OCI-LY7 (cell line): ENCODE measurements at regions of chr4 and their contacts with region 1.

Region 1: GRCh38 chr4:70839589-70840093 is at the start of gene GRSF1:
- DNase-seq: peak; percentile 97
- H3K4me3 ChIP-seq: peak within 1 kb of the TSS; percentile 73
- H3K27ac ChIP-seq: peak within 1 kb of the TSS; percentile 76
- H3K4me1 ChIP-seq: peaks cover 41% of the 10 kb centered on the region
- CTCF ChIP-seq: peak; percentile 21; the same call in 1 of the 2 replicates
- total RNA-seq, gene GRSF1: 32.8 and 36.7 TPM in 2 replicates

Region 2: GRCh38 chr4:70704331-70705145 is 135.1 kb before region 1 on chr4:
- CTCF ChIA-PET with region 1: no interaction called
- POLR2A ChIA-PET with region 1: interaction called, 5 read pairs
- intact Hi-C with region 1: loop called (anchors 2 kb)
- DNase-seq: peak; percentile 85
- H3K4me3 ChIP-seq: peak overlapping the region; percentile 90
- H3K27ac ChIP-seq: peak overlapping the region; percentile 77
- H3K4me1 ChIP-seq: peaks cover 32% of the 10 kb centered on the region
- CTCF ChIP-seq: peak; percentile 71

Region 3: DNA sequence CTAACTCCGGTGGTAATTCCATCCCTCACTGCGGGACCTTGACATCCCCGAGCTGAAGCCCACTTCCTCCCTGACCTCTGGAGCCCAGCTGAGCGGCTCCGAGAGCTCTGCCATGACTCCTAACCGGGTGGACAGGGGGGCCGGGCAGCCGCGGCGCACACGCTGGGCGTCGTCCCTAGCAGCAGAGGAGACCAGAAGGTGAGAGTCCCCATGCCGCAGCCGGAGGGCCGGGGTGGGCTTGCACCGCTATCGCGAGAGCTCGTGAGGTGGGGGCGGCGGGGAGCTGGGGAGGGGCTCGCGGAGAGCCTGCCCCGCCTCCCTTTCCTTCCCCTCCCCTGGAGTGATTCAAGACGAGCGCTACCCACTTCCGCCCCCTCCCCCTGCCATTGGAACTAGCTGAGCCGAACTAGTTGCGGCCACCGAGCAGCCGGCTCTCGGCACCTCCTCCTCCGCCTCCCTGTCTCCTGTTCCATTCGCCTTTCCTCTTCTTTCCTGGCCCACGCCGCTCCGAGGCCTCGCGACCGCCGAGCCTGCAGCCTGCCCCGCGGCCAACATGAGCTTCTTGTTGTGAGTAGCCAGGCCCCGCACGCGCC is 62.4 kb after region 1 on chr4 and contains the start of gene MOB1B:
- CTCF ChIA-PET with region 1: no interaction called
- POLR2A ChIA-PET with region 1: interaction called, 10 read pairs
- intact Hi-C with region 1: loop called (anchors 1 kb)
- DNase-seq: peak; percentile 91
- H3K4me3 ChIP-seq: peak within 1 kb of the TSS; percentile 95
- H3K27ac ChIP-seq: peak within 1 kb of the TSS; percentile 46
- H3K4me1 ChIP-seq: peaks cover 15% of the 10 kb centered on the region
- CTCF ChIP-seq: 0 out of 2 replicates have a peak, but pooled peaks have one; percentile 24
- total RNA-seq, gene MOB1B: 3.9 and 4.7 TPM in 2 replicates

Region 4: DNA sequence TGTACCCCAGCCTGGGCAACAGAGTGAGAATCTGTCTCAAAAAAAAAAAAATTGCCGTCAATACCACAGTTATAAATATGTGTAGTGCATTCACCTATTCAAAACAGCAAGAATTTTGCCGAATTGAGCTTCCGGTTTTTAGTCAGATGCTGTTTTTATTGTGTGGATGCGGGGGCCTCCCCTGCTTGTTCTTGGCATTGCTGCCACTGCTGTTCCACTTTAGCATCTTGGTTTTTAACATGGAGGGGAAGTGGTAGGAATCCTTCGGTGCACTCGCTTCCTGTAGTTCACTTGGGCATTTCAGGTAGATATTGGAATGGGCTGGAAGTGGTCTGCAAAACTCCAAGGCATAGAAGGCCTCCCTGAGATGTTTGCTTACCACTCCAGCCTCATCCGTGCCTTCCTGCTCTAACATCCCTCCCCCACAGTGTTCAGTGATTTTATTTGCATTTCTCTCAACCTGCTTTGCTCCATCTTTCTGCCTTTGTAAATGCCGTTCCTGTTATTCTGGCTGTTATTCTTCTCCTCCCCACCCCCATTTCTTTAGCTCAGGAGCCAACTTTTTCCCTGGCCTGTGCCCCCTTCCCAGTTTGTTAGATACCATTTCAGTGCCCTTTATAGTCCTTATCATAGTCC is 88.0 kb after region 1 on chr4:
- CTCF ChIA-PET with region 1: no interaction called
- POLR2A ChIA-PET with region 1: no interaction called
- intact Hi-C with region 1: loop called (anchors 1 kb)
- DNase-seq: peak; percentile 81
- H3K4me3 ChIP-seq: peak overlapping the region; percentile 63
- H3K27ac ChIP-seq: peak overlapping the region; percentile 88
- H3K4me1 ChIP-seq: peaks cover 94% of the 10 kb centered on the region
- CTCF ChIP-seq: peak; percentile 48

Region 5: DNA sequence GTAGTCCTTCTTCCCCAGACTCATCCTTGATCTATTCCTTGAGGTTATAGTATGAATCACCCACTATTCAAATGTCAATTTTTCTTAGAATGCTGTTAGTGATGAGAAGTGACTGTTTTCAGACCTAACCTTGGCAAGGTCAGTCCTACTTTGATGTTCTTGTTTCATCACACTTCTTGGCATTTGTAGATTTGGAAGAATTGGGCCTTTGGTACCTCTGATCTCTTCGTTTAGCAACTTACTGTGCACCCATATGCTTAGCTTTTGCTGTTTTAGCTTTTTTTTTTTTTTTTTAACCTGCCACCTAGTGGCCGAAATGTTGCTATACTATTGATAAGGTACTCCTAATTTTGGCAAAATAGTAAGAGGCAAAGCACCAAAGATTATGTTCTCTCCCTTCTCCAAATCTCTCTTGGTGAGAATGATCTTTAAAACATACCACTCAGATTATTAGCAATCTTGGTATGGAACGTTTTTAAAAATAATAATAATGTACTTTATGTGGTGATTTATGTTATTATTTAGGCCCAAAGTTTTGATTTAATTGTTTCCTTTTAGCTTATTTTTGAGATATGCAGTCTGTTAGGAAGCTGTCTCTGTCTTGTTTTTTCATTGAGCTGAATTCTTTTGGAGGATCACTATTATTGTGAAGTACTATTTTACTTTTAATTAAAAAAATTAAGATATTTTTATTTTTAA is 170.4 kb after region 1 on chr4:
- CTCF ChIA-PET with region 1: no interaction called
- POLR2A ChIA-PET with region 1: interaction called, 3 read pairs
- intact Hi-C with region 1: loop called (anchors 2 kb)
- DNase-seq: peak; percentile 66
- H3K4me3 ChIP-seq: no peak overlapping the region
- H3K27ac ChIP-seq: peak overlapping the region; percentile 44
- H3K4me1 ChIP-seq: peaks cover 50% of the 10 kb centered on the region
- CTCF ChIP-seq: peak; percentile 96